Posterior cingulate gyrus (tissue), 11 donors: ENCODE measurements at regions of chr14 and their contacts with region 1.

Region 1: GRCh38 chr14:98593361-98593761 is 678.6 kb downstream of the BCL11B start:
- DNase-seq: peak; percentile 72 to 98 (median 88)

Region 2: DNA sequence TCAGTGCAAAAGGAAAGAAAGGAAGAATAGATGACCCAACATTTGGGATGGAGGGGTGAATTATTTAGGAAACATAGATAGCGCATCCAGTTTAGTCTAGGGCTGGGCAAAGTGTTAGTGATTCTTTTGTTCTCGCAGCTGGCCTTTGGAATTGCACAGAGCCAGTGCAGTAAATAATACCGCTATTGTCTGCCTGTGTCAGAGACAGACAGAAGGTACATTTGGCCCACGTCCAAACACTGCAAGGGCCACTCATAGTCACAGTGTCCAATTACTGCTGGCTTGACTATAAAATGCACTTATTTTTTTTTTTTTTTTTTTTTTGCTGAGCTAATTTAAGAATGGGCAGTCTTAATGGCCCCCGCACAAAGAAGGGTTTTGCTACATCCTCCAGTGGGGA is 40.0 kb after region 1 on chr14:
- intact Hi-C with region 1: loop called (anchors 2 kb)
- DNase-seq: peak in 9 of 10 donors; percentile 28 to 94 (median 67)